HepG2 (cell line): ENCODE measurements at regions of chr16 and their contacts with region 1.

Region 1: DNA sequence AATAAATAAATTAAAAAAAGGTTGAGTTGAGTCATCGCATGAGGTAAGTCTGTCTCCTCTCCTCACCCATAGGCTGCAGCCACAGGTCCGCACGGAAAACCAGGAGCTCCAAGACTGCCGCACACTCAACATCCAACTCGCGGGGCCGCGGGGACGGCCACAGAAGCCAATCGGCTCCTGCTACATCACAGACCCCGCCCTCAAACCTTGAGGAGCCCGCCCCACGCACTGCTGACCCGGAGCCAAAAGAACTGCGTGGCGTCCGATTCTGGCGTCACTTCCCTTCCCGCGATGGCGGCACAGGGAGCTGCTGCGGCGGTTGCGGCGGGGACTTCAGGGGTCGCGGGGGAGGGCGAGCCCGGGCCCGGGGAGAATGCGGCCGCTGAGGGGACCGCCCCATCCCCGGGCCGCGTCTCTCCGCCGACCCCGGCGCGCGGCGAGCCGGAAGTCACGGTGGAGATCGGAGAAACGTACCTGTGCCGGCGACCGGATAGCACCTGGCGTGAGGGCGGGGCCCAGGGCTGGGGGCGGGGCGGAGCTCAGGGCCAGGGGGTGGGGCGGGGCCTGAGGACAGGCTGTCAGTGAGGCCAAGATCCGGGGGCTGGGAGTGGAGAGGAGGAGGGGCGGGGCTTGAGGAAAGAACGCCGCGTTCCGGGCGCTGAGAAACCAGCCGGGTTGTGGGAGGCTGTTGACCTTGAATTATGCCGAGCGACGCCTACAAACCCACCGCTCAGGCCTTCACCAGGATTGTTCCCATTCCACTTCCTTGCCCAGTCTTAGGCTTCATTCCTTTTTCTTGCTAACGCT is at the start of gene KAT8:
- DNase-seq: peak; percentile 99
- ATAC-seq: peak; percentile 93
- H3K4me3 ChIP-seq: peak within 1 kb of the TSS; percentile 67 to 83 (median 81)
- H3K27ac ChIP-seq: peak within 1 kb of the TSS; percentile 70
- H3K4me1 ChIP-seq: peaks cover 36% of the 10 kb centered on the region
- H3K27me3 ChIP-seq: no peaks in the 10 kb centered on the region; a peak in 1 of 5 replicates
- CTCF ChIP-seq: peak; percentile 10; the same call in 1 of the 2 replicates
- EP300 ChIP-seq: 0 out of 4 replicates have a peak, but pooled peaks of 1 of the 2 experiments have one; percentile 8
- POLR2A ChIP-seq: peak; percentile 80 to 94
- RAD21 ChIP-seq: peak; percentile 24; the same call in 1 of the 2 replicates
- total RNA-seq, gene KAT8: 69.5 and 79.0 TPM in 2 replicates

Region 2: GRCh38 chr16:31073968-31074813 is 43.4 kb before region 1 on chr16 and contains the starts of genes ZNF646 and ZNF668:
- CTCF ChIA-PET with region 1: no interaction called
- POLR2A ChIA-PET with region 1: interaction called, 56 read pairs
- in situ Hi-C with region 1: no loop called
- intact Hi-C with region 1: loop called (anchors 1 kb)
- DNase-seq: peak; percentile 99
- ATAC-seq: peak; percentile 86
- H3K4me3 ChIP-seq: peak within 1 kb of the TSS; percentile 75 to 97 (median 90)
- H3K27ac ChIP-seq: peak within 1 kb of the TSS; percentile 83
- H3K4me1 ChIP-seq: peaks cover 22% of the 10 kb centered on the region
- H3K27me3 ChIP-seq: no peaks in the 10 kb centered on the region; a peak in 1 of 5 replicates
- CTCF ChIP-seq: no peak; the same call in 1 of the 2 replicates
- EP300 ChIP-seq: peak in 1 of 2 experiments; percentile 34; a peak in 1 of 4 replicates
- POLR2A ChIP-seq: peak; percentile 84 to 90
- RAD21 ChIP-seq: peak; percentile 71
- total RNA-seq, gene ZNF646: 7.8 and 10.9 TPM in 2 replicates
- total RNA-seq, gene ZNF668: 7.5 and 9.8 TPM in 2 replicates

Region 3: DNA sequence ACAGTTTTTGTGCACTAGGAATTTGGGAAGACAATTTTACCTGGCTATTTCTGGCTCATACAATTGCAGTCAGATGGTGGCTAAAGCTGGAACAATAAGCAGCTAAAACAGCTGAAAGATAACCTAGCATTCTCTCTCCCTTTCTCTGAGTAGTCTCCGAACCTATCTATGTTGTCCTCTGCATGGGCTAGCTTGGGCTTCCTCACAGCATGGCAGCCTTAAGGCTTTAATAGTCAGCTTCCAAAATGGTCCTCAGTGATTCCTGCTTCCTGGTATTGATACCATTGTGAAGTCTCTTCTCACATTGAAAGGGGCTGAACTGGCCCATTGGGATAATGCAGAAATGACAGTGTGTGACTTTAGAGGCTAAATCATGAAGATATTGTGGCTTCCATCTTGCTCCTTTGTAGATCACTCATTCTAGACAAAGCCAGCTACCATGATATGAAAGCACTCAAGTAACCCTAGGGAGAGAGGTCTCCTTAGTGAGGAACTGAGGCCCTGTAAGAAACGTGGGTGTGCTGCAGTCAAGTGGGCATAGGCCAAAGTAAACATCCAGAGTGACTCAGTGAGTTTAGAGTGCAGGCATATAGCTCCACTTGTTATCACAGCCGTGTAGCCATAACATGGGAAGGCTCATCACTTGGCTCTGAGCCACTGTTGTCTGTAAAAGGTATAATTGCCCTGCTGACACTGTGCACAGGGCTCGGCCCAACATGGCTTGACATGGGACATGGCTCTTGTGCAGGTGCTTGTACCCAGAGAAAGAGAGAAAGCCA is 17.5 kb before region 1 on chr16:
- CTCF ChIA-PET with region 1: no interaction called
- POLR2A ChIA-PET with region 1: interaction called, 32 read pairs
- in situ Hi-C with region 1: no loop called
- intact Hi-C with region 1: no loop called
- DNase-seq: peak; percentile 34
- ATAC-seq: no peak
- H3K4me3 ChIP-seq: no peak overlapping the region
- H3K27ac ChIP-seq: no peak overlapping the region
- H3K4me1 ChIP-seq: peaks cover 33% of the 10 kb centered on the region
- H3K27me3 ChIP-seq: no peaks in the 10 kb centered on the region
- CTCF ChIP-seq: no peak
- EP300 ChIP-seq: no peak
- POLR2A ChIP-seq: no peak
- RAD21 ChIP-seq: no peak

Region 4: DNA sequence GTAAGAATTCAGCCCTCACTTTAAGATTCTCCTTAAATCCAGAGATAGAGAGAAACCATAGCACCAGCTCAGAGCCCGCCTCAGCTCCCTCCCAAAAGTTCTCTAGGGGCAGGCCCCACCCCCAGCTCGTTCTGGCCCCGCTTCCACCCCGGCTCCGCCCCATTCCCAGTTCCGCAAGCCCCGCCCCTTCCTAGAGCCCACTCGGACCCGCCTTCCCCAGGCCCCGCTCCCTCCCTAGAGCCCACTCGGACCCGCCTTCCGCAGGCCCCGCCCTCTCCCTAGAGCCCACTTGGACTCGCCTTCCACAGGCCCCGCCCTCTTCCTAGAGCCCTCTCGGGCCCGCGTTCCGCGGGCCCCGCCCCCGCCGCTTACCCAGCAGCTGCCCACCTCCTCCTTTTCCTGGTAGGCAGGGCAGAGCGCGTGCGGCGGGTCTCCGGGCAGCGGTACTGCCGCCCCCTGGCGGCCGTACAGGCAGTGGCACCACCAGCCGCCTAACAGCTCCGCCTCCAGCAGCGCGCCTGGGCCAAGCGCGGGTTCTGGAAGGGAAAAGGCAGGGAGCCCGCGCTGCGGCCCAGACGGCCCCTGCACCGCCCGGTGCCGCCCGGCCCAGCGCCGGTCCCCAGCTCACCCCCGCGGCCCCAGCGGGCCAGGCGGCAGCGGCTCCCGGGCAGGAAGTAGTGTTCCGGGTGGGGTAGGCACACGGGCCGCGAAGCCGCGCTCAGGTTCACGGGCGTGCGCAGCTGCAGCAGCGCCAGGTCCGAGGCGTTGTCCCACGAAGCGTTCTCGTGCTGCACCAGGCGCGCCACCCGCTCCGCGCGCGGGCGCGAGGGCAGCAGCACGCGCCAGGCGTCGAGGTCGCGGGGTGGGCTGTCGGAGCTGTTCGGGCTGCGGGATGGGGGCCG is 24.8 kb after region 1 on chr16:
- CTCF ChIA-PET with region 1: no interaction called
- POLR2A ChIA-PET with region 1: interaction called, 275 read pairs
- in situ Hi-C with region 1: no loop called
- intact Hi-C with region 1: loop called (anchors 1 kb)
- DNase-seq: peak; percentile 98
- ATAC-seq: peak; percentile 74
- H3K4me3 ChIP-seq: peak overlapping the region; percentile 39 to 77 (median 64)
- H3K27ac ChIP-seq: peak overlapping the region; percentile 80
- H3K4me1 ChIP-seq: peaks cover 65% of the 10 kb centered on the region
- H3K27me3 ChIP-seq: peaks cover 0 to 14% of the 10 kb centered on the region in 2 experiments; a peak in 3 of 5 replicates
- CTCF ChIP-seq: peak; percentile 98
- EP300 ChIP-seq: peak; percentile 26 to 27; a peak in 1 of 4 replicates
- POLR2A ChIP-seq: no peak
- RAD21 ChIP-seq: peak; percentile 99